Breast epithelium (tissue), 4 donors: ENCODE measurements at regions of chr20 and their contacts with region 1.

Region 1: GRCh38 chr20:2795991-2796660 is 4.3 kb downstream of the CPXM1 start:
- DNase-seq: no peak
- H3K4me3 ChIP-seq: no peak overlapping the region
- H3K27ac ChIP-seq: no peak overlapping the region
- H3K4me1 ChIP-seq: no peaks in the 10 kb centered on the region
- H3K27me3 ChIP-seq: peaks cover 0 to 5% of the 10 kb centered on the region in 2 donors
- CTCF ChIP-seq: no peak
- POLR2A ChIP-seq: no peak

Region 2: DNA sequence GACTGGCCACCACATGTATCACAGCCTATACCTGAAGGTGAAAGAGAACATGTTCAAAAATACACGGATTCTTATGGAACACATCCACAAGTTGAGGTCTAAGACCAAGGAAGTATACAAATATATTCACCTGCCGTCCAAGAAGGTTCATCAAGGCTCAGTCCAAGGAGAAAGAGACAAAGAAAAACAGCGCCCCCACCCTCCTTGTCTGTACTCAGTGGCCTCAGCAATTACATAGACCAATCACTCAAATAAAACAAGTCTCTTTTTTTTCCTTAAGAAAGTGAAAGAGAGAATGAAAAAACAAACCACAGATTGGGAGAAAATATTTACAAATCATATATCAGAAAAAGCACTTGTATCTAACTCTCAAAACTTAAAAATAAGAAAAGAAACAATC is 15.2 kb before region 1 on chr20:
- intact Hi-C with region 1: loop called (anchors 1 kb)
- DNase-seq: no peak
- H3K4me3 ChIP-seq: no peak overlapping the region
- H3K27ac ChIP-seq: no peak overlapping the region
- H3K4me1 ChIP-seq: no peaks in the 10 kb centered on the region
- H3K27me3 ChIP-seq: no peaks in the 10 kb centered on the region
- CTCF ChIP-seq: no peak
- POLR2A ChIP-seq: no peak

Region 3: GRCh38 chr20:2955257-2955970 is 159.3 kb after region 1 on chr20:
- intact Hi-C with region 1: no loop called
- DNase-seq: no peak
- H3K4me3 ChIP-seq: no peak overlapping the region
- H3K27ac ChIP-seq: no peak overlapping the region
- H3K4me1 ChIP-seq: no peaks in the 10 kb centered on the region
- H3K27me3 ChIP-seq: no peaks in the 10 kb centered on the region
- CTCF ChIP-seq: no peak
- POLR2A ChIP-seq: no peak